CD4-positive, alpha-beta T cell (primary cell): ENCODE measurements at regions of chr5 and their contacts with region 1.

Region 1: GRCh38 chr5:115586601-115587048 is 15.7 kb downstream of the TICAM2 start:
- DNase-seq: peak in 3 of 14 experiments; percentile 31 to 46 (median 44)
- ATAC-seq: no peak
- H3K4me3 ChIP-seq: no peak overlapping the region
- H3K4me3 Mint-ChIP-seq: no peak overlapping the region
- H3K27ac ChIP-seq: no peak overlapping the region
- H3K27ac Mint-ChIP-seq: no peak overlapping the region
- H3K4me1 ChIP-seq: no peaks in the 10 kb centered on the region
- H3K4me1 Mint-ChIP-seq: no peaks in the 10 kb centered on the region
- H3K27me3 ChIP-seq: no peaks in the 10 kb centered on the region
- H3K27me3 Mint-ChIP-seq: no peaks in the 10 kb centered on the region
- CTCF ChIP-seq: peak; percentile 74

Region 2: DNA sequence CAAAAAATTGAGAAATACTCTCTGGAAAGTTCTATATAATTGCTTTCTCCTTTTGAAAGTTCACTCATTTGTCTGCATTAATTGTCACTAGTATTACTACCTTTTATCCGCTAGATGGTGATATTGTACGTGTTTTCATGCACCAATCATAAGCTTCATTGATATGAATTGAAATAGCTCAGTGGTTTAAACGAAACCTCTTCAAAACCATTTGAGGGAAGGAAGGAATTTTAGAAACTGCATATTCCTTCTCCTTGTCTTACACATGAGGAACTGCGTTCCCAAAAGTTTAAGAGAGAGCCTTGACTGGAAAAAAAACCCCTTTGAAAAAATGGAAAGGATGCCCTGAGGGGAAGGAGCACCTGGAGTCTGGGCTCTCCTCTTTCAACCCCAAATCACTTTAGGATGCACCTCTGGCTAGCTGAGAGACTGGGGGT is 1974.5 kb before region 1 on chr5:
- CTCF ChIA-PET with region 1: no interaction called
- POLR2A ChIA-PET with region 1: no interaction called
- intact Hi-C with region 1: loop called (anchors 5 kb)
- DNase-seq: peak in 3 of 14 experiments; percentile 43 to 58 (median 58)
- ATAC-seq: peak; percentile 80
- H3K4me3 ChIP-seq: no peak overlapping the region
- H3K4me3 Mint-ChIP-seq: no peak overlapping the region
- H3K27ac ChIP-seq: no peak overlapping the region
- H3K27ac Mint-ChIP-seq: no peak overlapping the region
- H3K4me1 ChIP-seq: peaks cover 3% of the 10 kb centered on the region
- H3K4me1 Mint-ChIP-seq: peaks cover 5% of the 10 kb centered on the region
- H3K27me3 ChIP-seq: peaks cover 0 to 3% of the 10 kb centered on the region in 2 experiments
- H3K27me3 Mint-ChIP-seq: peaks cover 32% of the 10 kb centered on the region
- CTCF ChIP-seq: peak; percentile 72

Region 3: GRCh38 chr5:115098041-115098702 is 488.5 kb before region 1 on chr5:
- CTCF ChIA-PET with region 1: no interaction called
- POLR2A ChIA-PET with region 1: no interaction called
- intact Hi-C with region 1: loop called in 1 of 2 experiments (anchors 5 kb)
- DNase-seq: peak in 7 of 14 experiments; percentile 1 to 56 (median 8)
- ATAC-seq: peak; percentile 54
- H3K4me3 ChIP-seq: no peak overlapping the region
- H3K4me3 Mint-ChIP-seq: no peak overlapping the region
- H3K27ac ChIP-seq: no peak overlapping the region
- H3K27ac Mint-ChIP-seq: no peak overlapping the region
- H3K4me1 ChIP-seq: no peaks in the 10 kb centered on the region
- H3K4me1 Mint-ChIP-seq: no peaks in the 10 kb centered on the region
- H3K27me3 ChIP-seq: peaks cover 2 to 7% of the 10 kb centered on the region in 2 experiments
- H3K27me3 Mint-ChIP-seq: peaks cover 28% of the 10 kb centered on the region
- CTCF ChIP-seq: peak; percentile 63

Region 4: DNA sequence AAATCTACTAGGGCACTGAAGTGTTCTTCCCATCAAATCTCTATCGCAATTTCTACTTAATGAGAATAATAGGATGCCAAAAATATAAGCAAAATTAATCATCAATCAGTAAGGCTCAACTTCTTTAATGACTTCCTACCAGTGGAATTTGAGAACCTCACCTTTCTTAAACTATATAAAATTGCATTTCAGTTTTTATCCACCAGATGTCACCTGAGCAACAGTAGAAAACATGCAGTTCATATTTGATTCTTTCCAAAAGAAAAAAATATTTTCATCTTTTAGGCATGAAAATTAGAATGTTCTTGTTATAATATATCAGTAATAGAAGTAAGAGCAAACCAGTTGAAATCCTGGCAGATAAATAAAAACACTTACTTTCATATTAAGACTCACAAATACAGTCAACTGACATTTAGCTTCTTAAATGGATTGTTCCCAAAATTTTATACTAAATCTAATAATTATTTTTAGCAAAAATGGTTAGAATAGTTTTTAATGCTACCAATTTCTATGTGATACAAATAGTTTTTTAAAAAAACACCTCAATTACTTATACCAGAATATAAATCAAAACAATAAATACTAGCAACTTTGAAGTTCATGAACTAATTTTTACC is 276.8 kb before region 1 on chr5:
- CTCF ChIA-PET with region 1: no interaction called
- POLR2A ChIA-PET with region 1: no interaction called
- intact Hi-C with region 1: loop called in 1 of 2 experiments (anchors 1 kb)
- DNase-seq: peak in 3 of 14 experiments; percentile 61 to 68 (median 66)
- ATAC-seq: peak; percentile 52
- H3K4me3 ChIP-seq: no peak overlapping the region
- H3K4me3 Mint-ChIP-seq: no peak overlapping the region
- H3K27ac ChIP-seq: no peak overlapping the region
- H3K27ac Mint-ChIP-seq: no peak overlapping the region
- H3K4me1 ChIP-seq: no peaks in the 10 kb centered on the region
- H3K4me1 Mint-ChIP-seq: no peaks in the 10 kb centered on the region
- H3K27me3 ChIP-seq: peaks cover 4 to 14% of the 10 kb centered on the region in 2 experiments
- H3K27me3 Mint-ChIP-seq: peaks cover 48% of the 10 kb centered on the region
- CTCF ChIP-seq: peak; percentile 83

Region 5: GRCh38 chr5:115686051-115686737 is 99.6 kb after region 1 on chr5:
- CTCF ChIA-PET with region 1: no interaction called
- POLR2A ChIA-PET with region 1: no interaction called
- intact Hi-C with region 1: no loop called
- DNase-seq: no peak
- ATAC-seq: no peak
- H3K4me3 ChIP-seq: no peak overlapping the region
- H3K4me3 Mint-ChIP-seq: no peak overlapping the region
- H3K27ac ChIP-seq: no peak overlapping the region
- H3K27ac Mint-ChIP-seq: no peak overlapping the region
- H3K4me1 ChIP-seq: no peaks in the 10 kb centered on the region
- H3K4me1 Mint-ChIP-seq: no peaks in the 10 kb centered on the region
- H3K27me3 ChIP-seq: peaks cover 3 to 9% of the 10 kb centered on the region in 2 experiments
- H3K27me3 Mint-ChIP-seq: peaks cover 43% of the 10 kb centered on the region
- CTCF ChIP-seq: no peak

Region 6: DNA sequence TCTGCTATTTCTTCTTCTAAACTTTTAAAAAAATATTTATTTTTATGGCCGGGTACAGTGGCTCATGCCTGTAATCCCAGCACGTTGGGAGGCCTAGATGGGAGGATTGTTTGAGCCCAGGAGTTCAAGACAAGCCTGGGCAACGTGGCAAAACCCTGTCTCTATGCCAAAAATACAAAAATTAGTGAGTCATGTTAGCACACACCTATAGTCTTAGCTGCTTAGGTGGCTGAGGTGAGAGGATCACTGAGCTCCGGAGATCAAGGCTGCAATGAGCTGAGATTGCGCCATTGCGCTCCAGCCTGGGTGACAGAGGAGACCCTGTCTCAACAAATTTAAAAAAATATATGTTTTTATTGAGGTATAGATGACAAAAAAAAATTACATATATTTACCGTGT is 260.7 kb after region 1 on chr5:
- CTCF ChIA-PET with region 1: no interaction called
- POLR2A ChIA-PET with region 1: no interaction called
- intact Hi-C with region 1: no loop called
- DNase-seq: no peak
- ATAC-seq: no peak
- H3K4me3 ChIP-seq: no peak overlapping the region
- H3K4me3 Mint-ChIP-seq: no peak overlapping the region
- H3K27ac ChIP-seq: no peak overlapping the region
- H3K27ac Mint-ChIP-seq: no peak overlapping the region
- H3K4me1 ChIP-seq: peaks cover 7% of the 10 kb centered on the region
- H3K4me1 Mint-ChIP-seq: peaks cover 48% of the 10 kb centered on the region
- H3K27me3 ChIP-seq: no peaks in the 10 kb centered on the region
- H3K27me3 Mint-ChIP-seq: no peaks in the 10 kb centered on the region
- CTCF ChIP-seq: no peak